ENCODE measurements at regions of chr22 and their contacts with region 1.

Region 1: DNA sequence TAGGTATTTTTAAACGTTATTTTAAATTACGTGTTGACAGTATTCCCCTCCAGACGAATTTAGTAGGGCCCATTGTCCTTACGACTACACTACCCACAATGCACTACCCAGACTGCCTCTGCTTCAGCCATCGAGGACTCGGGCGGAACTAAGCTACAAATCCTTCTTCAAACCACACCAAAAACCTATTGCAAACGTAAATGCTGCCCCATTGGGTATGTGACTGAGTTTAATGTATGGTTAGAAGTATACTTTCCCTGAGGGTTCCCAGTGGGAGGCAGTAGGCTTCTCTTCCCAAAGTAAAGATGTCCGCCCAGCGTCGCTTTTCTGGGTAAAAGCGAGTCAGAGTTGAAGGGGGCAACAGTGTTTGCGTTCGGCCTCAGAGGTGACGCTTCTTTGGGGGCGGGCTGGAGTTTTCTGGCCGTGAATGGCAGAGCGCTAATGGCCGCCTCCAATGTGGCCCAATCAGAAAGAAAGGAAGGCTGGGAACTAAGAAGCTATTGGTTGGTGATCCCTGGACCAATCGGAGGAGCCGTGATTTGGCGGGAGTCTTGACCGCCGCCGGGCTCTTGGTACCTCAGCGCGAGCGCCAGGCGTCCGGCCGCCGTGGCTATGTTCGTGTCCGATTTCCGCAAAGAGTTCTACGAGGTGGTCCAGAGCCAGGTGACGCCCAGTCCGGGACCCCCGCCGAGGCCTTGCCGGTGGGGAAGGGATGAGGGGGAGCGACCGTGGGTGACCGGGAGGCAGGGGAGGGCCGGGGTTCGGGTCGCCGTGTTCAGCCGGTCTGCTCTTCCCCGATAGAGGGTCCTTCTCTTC is at the start of gene CDC45:
- DNase-seq: peak; percentile 96
- H3K4me3 Mint-ChIP-seq: peak within 1 kb of the TSS; percentile 100
- H3K27ac Mint-ChIP-seq: peak within 1 kb of the TSS; percentile 95
- H3K4me1 Mint-ChIP-seq: peaks cover 46% of the 10 kb centered on the region
- H3K27me3 Mint-ChIP-seq: no peaks in the 10 kb centered on the region
- total RNA-seq, gene CDC45: 53.2 to 56.2 TPM

Region 2: DNA sequence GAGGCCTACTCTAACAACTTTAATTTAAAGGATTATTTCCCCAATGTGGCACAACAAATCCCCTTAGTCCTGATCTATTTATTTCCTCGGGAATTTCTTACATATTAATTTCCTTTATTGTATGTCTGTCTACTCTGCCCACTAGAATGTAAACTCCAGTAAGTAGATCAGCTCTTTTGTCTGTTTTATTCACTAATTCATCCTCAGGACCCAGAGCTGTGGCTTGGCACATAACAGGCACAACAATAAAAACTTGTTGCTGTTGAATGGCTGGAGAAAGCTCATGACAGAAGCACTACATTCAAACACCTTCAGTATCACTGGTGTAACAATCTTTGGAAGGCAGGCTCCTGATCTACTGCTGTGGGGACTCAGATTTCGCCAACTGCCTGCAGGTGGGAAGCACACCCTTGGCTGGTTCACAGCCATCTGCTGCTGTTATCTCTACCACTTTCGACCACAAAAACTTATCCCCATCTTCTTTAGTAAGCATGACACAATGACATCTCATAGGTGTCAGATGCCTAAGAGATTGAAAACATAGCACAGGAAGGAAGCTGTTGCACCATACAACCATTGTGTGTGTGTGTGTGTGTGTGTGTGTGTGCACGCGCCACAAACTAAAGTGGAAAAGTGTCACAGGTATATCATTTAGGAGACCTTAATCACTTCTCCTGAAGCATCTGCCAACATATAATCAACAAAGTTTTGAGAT is 59.9 kb before region 1 on chr22:
- CTCF ChIA-PET with region 1: interaction called, 4 read pairs
- POLR2A ChIA-PET with region 1: interaction called, 10 read pairs
- DNase-seq: peak; percentile 67
- H3K4me3 Mint-ChIP-seq: peak overlapping the region; percentile 12
- H3K27ac Mint-ChIP-seq: peak overlapping the region; percentile 87
- H3K4me1 Mint-ChIP-seq: peaks cover 71% of the 10 kb centered on the region
- H3K27me3 Mint-ChIP-seq: no peaks in the 10 kb centered on the region

Region 3: GRCh38 chr22:19447388-19448075 is 32.0 kb before region 1 on chr22 and contains the start of gene C22orf39:
- CTCF ChIA-PET with region 1: interaction called, 4 read pairs
- POLR2A ChIA-PET with region 1: interaction called, 45 read pairs
- DNase-seq: peak; percentile 91
- H3K4me3 Mint-ChIP-seq: peak within 1 kb of the TSS; percentile 80
- H3K27ac Mint-ChIP-seq: peak within 1 kb of the TSS; percentile 82
- H3K4me1 Mint-ChIP-seq: peaks cover 37% of the 10 kb centered on the region
- H3K27me3 Mint-ChIP-seq: no peaks in the 10 kb centered on the region
- total RNA-seq, gene C22orf39: 31.8 to 32.9 TPM

Region 4: GRCh38 chr22:19535001-19535400 is 55.4 kb after region 1 on chr22:
- CTCF ChIA-PET with region 1: no interaction called
- POLR2A ChIA-PET with region 1: no interaction called
- DNase-seq: no peak
- H3K4me3 Mint-ChIP-seq: no peak overlapping the region
- H3K27ac Mint-ChIP-seq: no peak overlapping the region
- H3K4me1 Mint-ChIP-seq: no peaks in the 10 kb centered on the region
- H3K27me3 Mint-ChIP-seq: peaks cover 24% of the 10 kb centered on the region

Region 5: GRCh38 chr22:19554834-19555404 is 75.4 kb after region 1 on chr22:
- CTCF ChIA-PET with region 1: no interaction called
- POLR2A ChIA-PET with region 1: no interaction called
- DNase-seq: no peak
- H3K4me3 Mint-ChIP-seq: no peak overlapping the region
- H3K27ac Mint-ChIP-seq: no peak overlapping the region
- H3K4me1 Mint-ChIP-seq: no peaks in the 10 kb centered on the region
- H3K27me3 Mint-ChIP-seq: peaks cover 13% of the 10 kb centered on the region

Region 6: DNA sequence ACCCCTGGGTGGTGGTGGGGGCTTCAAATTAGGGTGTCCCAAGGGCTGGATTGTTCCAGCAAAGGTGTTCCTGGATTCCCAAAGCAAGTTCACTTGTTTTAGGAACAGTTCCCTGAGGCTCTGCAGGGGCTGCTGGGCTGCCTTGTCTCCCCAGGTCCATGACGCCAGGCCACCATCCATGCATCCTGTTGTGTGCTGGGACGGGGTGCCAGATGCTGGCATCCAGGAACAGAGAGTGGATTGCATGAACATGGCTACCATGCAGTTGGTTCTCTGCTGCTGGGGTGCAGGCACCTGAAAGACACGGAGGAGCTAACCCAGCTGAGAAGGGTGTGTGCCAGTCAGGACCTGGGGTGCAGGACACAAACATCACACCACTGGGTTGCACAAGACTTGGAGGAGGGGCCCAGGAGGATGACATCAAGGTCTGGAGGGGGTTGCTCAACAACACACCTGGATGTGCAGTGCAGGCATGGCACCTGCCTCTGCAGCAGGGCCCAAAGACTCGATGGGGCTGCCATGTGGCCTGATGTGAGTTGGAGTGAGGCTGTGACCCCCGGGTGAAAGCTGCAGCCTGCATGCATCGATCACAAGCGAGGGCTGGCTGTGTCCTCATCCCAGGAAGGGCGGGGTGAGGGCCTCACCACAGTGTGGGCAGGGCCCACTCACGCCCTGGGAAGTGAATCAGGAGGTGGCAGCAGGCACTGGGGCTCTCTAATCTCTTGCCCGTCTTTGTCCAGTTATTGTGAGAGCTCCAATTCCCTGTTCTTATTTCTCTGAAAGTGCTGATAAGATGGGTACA is 118.7 kb after region 1 on chr22:
- CTCF ChIA-PET with region 1: no interaction called
- POLR2A ChIA-PET with region 1: no interaction called
- DNase-seq: peak; percentile 38
- H3K4me3 Mint-ChIP-seq: peak overlapping the region; percentile 30
- H3K27ac Mint-ChIP-seq: peak overlapping the region; percentile 78
- H3K4me1 Mint-ChIP-seq: peaks cover 38% of the 10 kb centered on the region
- H3K27me3 Mint-ChIP-seq: peaks cover 3% of the 10 kb centered on the region

Region 7: DNA sequence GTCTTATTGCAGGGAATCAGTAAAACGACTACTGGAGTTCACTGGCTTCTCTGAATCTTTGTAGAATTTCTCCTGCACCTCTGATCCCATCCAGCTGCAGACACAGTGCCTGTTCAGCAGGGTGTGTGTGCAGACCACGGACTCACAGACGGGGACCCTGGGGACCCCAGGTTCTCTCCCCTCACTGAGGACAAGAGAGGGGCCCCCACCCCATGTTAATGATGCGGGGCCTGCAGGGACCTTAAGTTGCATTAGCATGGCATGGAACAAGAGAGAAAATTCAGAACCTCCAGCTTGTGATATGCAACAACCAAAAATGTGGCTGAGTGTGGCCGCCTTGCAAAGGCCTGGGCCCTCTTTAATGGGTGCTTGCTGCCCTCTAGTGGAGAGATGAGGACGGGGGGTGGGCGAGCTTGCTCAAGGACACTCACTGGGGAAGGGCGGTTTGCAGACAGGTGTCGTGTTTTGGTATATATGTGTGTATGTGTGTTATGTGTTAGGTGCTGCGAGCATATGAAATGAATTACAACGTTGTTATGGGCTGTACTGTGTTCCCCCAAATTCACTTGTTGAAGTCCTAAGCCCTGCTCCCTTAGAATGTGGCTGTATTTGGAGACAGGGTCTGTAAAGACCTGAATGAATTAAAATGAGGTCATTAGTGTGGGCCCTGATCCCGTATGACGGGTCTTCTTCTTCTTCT is 150.3 kb after region 1 on chr22:
- CTCF ChIA-PET with region 1: interaction called, 18 read pairs
- POLR2A ChIA-PET with region 1: interaction called, 9 read pairs
- DNase-seq: peak; percentile 86
- H3K4me3 Mint-ChIP-seq: no peak overlapping the region
- H3K27ac Mint-ChIP-seq: no peak overlapping the region
- H3K4me1 Mint-ChIP-seq: peaks cover 2% of the 10 kb centered on the region
- H3K27me3 Mint-ChIP-seq: peaks cover 6% of the 10 kb centered on the region